ENCODE measurements at regions of chr16 and their contacts with region 1.

Region 1: DNA sequence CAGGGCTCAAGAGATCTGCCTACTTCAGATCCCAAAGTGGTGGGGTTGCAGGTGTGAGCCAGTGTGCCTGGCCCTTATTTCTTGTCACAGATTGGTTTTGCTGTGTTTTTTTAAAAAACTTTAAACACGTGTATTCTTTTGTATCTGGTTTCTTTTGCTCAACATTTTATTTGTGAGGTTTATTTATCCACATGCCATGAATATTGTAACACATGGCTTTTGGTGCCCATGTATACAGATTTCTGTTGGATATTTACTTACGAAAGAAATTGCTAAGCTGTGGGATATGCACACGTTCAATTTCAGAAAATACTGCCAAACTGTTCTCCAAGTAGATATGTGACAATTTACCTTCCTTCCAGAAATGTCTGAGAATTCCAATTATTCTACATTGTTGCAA is 18.7 kb upstream of the IL34 start:
- DNase-seq: no peak
- H3K4me3 ChIP-seq: no peak overlapping the region
- H3K27ac ChIP-seq: no peak overlapping the region
- H3K4me1 ChIP-seq: no peaks in the 10 kb centered on the region
- H3K27me3 ChIP-seq: no peaks in the 10 kb centered on the region
- CTCF ChIP-seq: no peak

Region 2: DNA sequence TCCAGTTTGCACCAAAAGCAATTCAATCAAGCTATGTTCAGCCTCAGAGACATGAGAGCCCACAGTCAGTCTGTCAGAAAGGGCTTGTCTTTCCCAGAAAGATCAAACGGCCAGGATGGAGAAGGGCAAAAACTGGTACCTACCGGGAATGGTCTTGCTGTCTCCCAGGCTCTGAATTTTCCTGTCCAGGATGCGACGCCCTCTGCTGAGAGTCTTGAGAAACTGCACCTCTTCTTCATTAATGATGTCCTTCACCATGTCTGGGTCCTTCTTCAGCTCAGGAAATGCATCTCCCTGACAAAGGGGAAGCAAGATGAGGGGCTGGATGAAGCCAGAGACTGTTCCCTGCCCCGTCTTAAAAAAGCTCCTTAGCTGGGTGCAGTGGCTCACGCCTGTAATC is 360.2 kb before region 1 on chr16:
- CTCF ChIA-PET with region 1: interaction called, 10 read pairs
- POLR2A ChIA-PET with region 1: no interaction called
- intact Hi-C with region 1: no loop called
- DNase-seq: no peak
- H3K4me3 ChIP-seq: no peak overlapping the region
- H3K27ac ChIP-seq: no peak overlapping the region
- H3K4me1 ChIP-seq: no peaks in the 10 kb centered on the region
- H3K27me3 ChIP-seq: no peaks in the 10 kb centered on the region
- CTCF ChIP-seq: peak; percentile 65

Region 3: GRCh38 chr16:70490261-70490803 is 137.4 kb before region 1 on chr16:
- CTCF ChIA-PET with region 1: no interaction called
- POLR2A ChIA-PET with region 1: no interaction called
- intact Hi-C with region 1: no loop called
- DNase-seq: no peak
- H3K4me3 ChIP-seq: no peak overlapping the region
- H3K27ac ChIP-seq: no peak overlapping the region
- H3K4me1 ChIP-seq: peaks cover 18% of the 10 kb centered on the region
- H3K27me3 ChIP-seq: no peaks in the 10 kb centered on the region
- CTCF ChIP-seq: no peak